HEK293T (cell line): ENCODE measurements at regions of chr11 and their contacts with region 1.

Region 1: DNA sequence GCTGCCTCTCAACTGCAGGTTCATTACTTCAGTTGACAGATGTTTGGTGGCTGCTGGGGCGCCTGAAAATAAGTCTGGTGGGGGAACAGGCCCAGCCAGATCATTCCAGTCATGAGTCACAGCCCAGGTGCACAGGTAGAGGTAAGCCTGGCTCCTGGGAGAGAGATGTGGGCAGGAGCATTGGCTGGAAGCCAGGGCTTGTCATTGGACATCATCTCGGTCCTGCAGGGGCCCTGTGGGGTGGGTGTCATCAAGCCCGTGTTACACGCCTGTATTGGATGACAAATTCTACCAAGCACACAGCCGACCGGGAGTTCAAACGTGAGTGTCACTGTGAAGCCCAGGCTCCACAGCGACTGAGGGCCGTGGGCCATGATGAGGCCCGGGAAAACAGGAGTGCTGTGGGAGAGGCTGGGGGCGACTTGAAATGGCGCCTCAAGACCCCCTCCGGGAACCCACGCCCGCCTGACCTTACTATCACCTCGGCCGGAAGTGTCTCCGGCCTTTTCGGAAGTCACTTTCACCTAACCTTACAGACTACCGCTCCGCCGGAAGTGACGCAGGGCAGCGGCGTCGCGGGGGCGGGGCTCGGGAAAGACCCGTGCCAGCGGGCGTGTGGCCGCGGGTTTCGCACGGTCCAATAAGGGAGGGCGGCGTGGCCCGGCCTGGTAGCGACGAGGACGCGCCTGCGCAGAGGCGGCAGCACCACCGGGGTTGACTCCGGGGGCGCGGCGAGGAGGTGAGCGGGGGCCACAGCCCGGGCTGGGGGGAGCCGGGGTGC is at the start of gene FKBP2:
- DNase-seq: peak; percentile 96

Region 2: DNA sequence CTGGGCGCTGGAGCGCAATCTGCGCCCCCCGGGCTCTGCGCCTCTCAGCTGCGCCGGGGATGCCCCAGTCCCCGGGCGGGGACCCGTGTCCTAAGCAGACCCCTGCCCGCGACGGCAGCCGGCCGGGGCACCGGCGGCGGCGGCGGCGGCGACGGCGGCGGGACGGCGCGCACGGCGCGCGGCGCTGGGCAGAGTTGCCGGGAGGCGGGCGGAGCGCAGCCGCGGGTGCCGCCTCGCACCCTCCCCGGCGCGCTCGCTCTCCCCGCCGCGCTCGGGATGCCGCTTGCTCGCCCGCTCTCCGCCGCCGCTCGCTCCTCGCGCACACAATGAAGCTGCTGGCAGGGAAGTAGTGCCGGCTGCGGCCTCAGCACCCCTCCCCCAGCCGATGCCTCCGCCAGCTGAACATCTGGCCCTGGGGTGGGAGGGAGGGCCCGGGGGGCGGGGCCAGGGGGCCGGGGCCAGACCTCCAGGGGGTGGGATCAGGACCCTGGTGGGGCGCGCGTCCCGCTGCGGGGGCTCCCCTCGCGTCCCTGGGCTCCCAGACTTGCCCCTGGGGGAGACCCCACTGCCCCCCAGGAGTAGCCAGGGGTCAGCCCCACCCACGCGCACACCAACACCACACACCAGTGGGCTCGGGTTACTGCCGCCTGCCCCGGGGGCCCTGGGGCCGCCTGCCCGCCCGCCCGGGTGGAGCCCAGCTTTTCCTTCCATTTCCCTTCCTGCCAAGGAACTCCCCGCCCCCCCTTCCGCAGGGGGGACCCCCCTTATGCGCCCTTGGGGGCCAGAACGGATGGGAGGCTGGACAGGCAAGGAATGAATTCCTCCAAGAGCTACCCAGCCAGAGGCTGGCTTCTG is 323.5 kb before region 1 on chr11 and contains the start of gene RCOR2:
- CTCF ChIA-PET with region 1: no interaction called
- POLR2A ChIA-PET with region 1: no interaction called
- DNase-seq: peak; percentile 85

Region 3: GRCh38 chr11:64225612-64226506 is 14.7 kb before region 1 on chr11 and contains the starts of genes NUDT22 and TRPT1:
- CTCF ChIA-PET with region 1: no interaction called
- POLR2A ChIA-PET with region 1: interaction called, 59 read pairs
- DNase-seq: peak; percentile 89